ENCODE measurements at regions of chr5 and their contacts with region 1.

Region 1: DNA sequence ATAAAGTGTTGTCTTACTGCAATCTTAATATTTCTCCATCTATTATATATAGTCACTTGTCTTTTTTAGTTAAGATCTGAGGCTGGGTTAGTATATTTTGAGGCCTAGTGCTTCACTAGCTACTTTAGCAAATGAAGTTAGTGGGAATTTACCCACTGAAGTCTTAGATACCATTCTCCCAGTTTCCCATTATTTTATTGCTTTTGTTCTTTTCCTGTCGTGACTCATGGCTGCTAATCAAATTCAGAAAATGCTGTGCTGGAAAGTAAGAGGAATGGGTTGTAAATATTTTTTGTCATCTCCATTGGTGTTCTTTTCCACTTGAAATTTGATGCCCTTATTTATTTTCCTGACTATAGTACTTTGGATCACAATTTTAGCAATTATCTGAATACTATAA is 14.2 kb downstream of the TCERG1 start:
- DNase-seq: peak; percentile 90
- H3K4me3 ChIP-seq: no peak overlapping the region
- H3K27ac ChIP-seq: peak overlapping the region; percentile 58
- H3K4me1 ChIP-seq: peaks cover 22% of the 10 kb centered on the region
- H3K27me3 ChIP-seq: no peaks in the 10 kb centered on the region
- CTCF ChIP-seq: no peak
- POLR2A ChIP-seq: no peak

Region 2: GRCh38 chr5:146474065-146474464 is 12.7 kb after region 1 on chr5:
- CTCF ChIA-PET with region 1: interaction called, 3 read pairs
- POLR2A ChIA-PET with region 1: no interaction called
- dilution Hi-C with region 1: no loop called
- intact Hi-C with region 1: loop called (anchors 1 kb)
- DNase-seq: peak; percentile 17
- H3K4me3 ChIP-seq: no peak overlapping the region
- H3K27ac ChIP-seq: no peak overlapping the region
- H3K4me1 ChIP-seq: peaks cover 30% of the 10 kb centered on the region
- H3K27me3 ChIP-seq: no peaks in the 10 kb centered on the region
- CTCF ChIP-seq: no peak
- POLR2A ChIP-seq: no peak